ENCODE measurements at regions of chr22 and their contacts with region 1.

Region 1: DNA sequence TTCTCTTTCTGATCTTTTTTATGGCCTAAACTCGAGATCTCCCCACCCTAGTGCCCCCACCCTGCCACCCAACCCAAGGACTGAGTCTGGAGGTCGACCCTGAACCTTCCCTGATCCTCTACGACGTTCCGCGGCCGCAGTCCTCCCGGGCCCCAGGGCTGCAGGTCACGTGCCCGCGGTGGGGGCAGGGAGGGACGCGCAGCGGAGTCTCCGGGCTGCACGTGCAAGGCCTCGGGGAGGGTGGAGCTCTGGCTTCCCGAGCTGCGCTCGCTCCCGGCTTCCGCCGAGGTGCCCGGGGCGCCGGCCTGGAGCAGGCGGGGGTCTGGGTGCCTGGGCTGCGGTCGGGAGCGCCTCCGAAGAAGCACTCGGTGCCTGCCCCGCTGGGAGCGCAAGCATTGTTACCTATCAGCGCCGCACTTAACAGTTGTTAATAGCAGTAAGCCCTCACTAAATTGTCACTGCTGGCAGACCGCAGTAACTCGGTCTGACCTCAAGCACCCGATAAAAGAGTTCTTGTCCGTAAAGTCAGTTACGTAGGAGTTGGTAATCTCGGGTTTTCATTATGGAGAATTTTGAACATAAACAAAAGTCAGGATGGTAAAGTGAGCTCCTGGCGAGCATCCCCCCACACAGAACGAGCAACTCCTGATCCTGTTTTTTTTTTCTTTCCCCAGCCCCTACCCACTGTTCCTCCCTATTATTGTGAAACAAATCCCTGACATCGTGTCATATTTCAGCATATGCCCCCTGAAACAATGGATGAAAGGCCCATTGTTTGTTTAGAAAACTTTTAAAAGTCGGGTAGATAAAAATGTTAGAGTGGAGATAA is 69.7 kb upstream of the EP300 start:
- DNase-seq: peak; percentile 79
- ATAC-seq: peak; percentile 73
- H3K4me3 ChIP-seq: peak overlapping the region; percentile 66 to 88 (median 75)
- H3K27ac ChIP-seq: peak overlapping the region; percentile 75
- H3K4me1 ChIP-seq: peaks cover 33% of the 10 kb centered on the region
- H3K27me3 ChIP-seq: peaks cover 2 to 9% of the 10 kb centered on the region in 2 experiments; a peak in 2 of 5 replicates
- CTCF ChIP-seq: no peak; the same call in none of the 2 replicates
- EP300 ChIP-seq: peak in 1 of 2 experiments; percentile 53; a peak in 2 of 4 replicates
- POLR2A ChIP-seq: no peak; a peak in 1 of 4 replicates
- RAD21 ChIP-seq: no peak

Region 2: GRCh38 chr22:41001722-41002122 is 21.0 kb before region 1 on chr22:
- CTCF ChIA-PET with region 1: no interaction called
- POLR2A ChIA-PET with region 1: interaction called, 50 read pairs
- in situ Hi-C with region 1: no loop called
- intact Hi-C with region 1: no loop called
- DNase-seq: peak; percentile 41
- ATAC-seq: peak; percentile 68
- H3K4me3 ChIP-seq: no peak overlapping the region
- H3K27ac ChIP-seq: peak overlapping the region; percentile 48
- H3K4me1 ChIP-seq: peaks cover 34% of the 10 kb centered on the region
- H3K27me3 ChIP-seq: no peaks in the 10 kb centered on the region
- CTCF ChIP-seq: no peak
- EP300 ChIP-seq: no peak
- POLR2A ChIP-seq: no peak
- RAD21 ChIP-seq: no peak

Region 3: DNA sequence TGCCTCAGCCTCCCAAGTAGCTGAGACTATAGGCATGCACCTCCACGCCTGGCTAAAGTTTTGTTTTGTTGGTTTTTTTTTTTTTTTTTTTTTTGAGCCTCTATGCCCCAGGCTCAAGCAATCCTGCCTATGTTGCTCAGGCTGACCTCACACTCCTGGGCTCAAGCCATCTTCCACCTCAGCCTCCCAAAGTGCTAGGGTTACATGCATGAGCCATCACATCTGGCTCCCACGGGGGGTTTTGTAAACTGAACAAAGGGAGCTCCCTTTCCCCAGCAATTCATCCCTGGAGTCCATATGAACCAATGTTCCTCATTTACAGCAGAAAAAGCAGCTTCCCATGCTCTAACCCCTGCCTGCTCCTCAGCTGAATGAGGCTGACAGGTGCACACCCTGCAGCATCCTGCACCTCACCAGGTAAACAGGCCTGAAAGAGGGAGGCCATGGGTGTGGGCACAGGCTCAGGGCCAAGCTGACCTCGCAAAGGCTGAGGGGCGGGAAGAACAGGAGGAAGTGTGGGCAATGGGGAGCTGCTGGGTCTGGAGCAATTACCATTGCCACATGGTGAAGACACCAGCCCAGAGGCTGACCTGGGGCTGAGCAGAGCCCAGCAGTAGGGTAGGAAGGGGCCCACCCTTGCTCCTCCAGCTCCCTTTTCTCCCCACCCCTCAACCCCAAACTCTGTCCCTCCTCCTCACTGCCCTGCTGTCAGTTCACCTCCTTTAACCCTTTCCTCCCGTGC is 13.3 kb before region 1 on chr22:
- CTCF ChIA-PET with region 1: no interaction called
- POLR2A ChIA-PET with region 1: interaction called, 15 read pairs
- in situ Hi-C with region 1: no loop called
- intact Hi-C with region 1: no loop called
- DNase-seq: no peak
- ATAC-seq: no peak; the same call in 2 of the 3 replicates
- H3K4me3 ChIP-seq: no peak overlapping the region
- H3K27ac ChIP-seq: no peak overlapping the region
- H3K4me1 ChIP-seq: no peaks in the 10 kb centered on the region
- H3K27me3 ChIP-seq: peaks cover 0 to 2% of the 10 kb centered on the region in 2 experiments; a peak in 1 of 5 replicates
- CTCF ChIP-seq: no peak
- EP300 ChIP-seq: no peak
- POLR2A ChIP-seq: no peak
- RAD21 ChIP-seq: no peak

Region 4: GRCh38 chr22:41048791-41049717 is 26.4 kb after region 1 on chr22:
- CTCF ChIA-PET with region 1: no interaction called
- POLR2A ChIA-PET with region 1: interaction called, 31 read pairs
- in situ Hi-C with region 1: no loop called
- intact Hi-C with region 1: no loop called
- DNase-seq: peak; percentile 61
- ATAC-seq: peak; percentile 91
- H3K4me3 ChIP-seq: peak overlapping the region; percentile 41 to 61 (median 46)
- H3K27ac ChIP-seq: peak overlapping the region; percentile 16
- H3K4me1 ChIP-seq: peaks cover 55% of the 10 kb centered on the region
- H3K27me3 ChIP-seq: no peaks in the 10 kb centered on the region; a peak in 1 of 5 replicates
- CTCF ChIP-seq: 0 out of 2 replicates have a peak, but pooled peaks have one; percentile 8
- EP300 ChIP-seq: no peak
- POLR2A ChIP-seq: peak; percentile 45 to 48; a peak in 2 of 4 replicates
- RAD21 ChIP-seq: no peak

Region 5: DNA sequence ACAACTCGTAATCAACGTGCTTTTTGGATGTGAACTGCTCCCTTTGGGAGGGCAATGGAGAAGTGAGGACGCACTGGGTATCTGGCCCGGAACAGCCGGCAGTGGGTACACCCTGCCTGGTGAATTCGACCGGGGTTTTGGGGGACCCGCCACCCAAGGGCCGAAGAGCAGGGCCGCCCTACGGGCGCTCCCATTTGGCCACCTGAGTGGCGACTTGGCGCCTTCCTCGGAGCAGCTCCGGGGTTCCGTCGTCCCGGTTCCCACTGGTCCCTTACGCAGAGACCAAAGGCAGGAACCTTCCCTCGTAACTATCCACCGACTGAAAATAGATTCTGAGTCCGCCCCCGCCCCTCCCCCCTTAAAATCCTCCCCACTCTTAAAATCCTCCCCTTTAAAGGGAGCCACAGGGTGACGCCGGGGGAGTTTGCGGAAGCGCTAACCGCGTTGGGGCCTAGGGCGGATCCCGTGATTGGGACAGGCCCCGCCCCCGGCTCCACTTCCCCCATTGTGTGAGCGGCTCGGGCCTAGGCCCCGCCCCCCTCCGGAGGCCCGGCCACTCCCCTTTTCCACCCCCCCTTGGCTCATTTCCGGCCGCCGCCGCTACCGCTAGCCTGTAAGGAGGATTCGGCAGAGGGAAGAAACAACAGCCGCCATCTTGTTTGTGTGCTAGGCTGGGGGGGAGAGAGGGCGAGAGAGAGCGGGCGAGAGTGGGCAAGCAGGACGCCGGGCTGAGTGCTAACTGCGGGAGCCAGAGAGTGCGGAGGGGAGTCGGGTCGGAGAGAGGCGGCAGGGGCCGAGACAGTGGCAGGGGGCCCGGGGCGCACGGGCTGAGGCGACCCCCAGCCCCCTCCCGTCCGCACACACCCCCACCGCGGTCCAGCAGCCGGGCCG is 68.7 kb after region 1 on chr22:
- CTCF ChIA-PET with region 1: no interaction called
- POLR2A ChIA-PET with region 1: interaction called, 33 read pairs
- in situ Hi-C with region 1: no loop called
- intact Hi-C with region 1: loop called (anchors 1 kb)
- DNase-seq: peak; percentile 96
- ATAC-seq: peak; percentile 90
- H3K4me3 ChIP-seq: peak overlapping the region; percentile 90 to 97 (median 92)
- H3K27ac ChIP-seq: peak overlapping the region; percentile 99
- H3K4me1 ChIP-seq: peaks cover 26% of the 10 kb centered on the region
- H3K27me3 ChIP-seq: no peaks in the 10 kb centered on the region
- CTCF ChIP-seq: no peak
- EP300 ChIP-seq: no peak
- POLR2A ChIP-seq: peak; percentile 48 to 70
- RAD21 ChIP-seq: peak; percentile 26; the same call in 1 of the 2 replicates

Region 6: DNA sequence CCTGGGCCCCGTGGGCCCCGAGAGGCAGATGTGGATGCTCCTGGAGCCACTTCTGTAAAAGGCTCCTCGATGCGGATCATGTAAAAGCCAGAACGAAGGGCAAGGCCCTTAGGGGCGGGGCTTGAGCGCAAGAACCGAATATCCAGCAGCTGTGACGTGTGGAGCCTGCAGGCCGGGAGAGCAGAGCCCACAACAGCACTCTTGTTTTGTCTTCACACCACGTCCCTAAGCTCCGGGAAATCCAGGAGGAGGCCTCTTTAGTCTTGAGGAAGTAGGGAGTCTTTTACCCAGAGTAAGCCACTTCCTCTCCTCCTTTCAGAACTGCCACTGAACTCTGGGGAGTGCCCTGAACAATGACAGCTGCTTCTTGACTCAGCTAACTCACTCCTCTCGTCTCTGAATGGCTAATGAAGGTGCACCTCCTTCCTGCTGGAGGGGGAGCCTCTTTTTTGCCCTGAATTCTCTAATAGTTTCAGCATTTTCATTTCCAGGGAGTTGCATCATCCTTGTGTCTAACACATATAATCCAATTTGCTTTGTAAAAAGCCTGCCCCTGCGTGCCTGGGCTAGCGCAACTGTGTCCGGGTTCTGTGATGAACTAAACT is 195.0 kb after region 1 on chr22:
- CTCF ChIA-PET with region 1: no interaction called
- POLR2A ChIA-PET with region 1: no interaction called
- in situ Hi-C with region 1: no loop called
- intact Hi-C with region 1: no loop called
- DNase-seq: no peak
- ATAC-seq: no peak
- H3K4me3 ChIP-seq: no peak overlapping the region
- H3K27ac ChIP-seq: no peak overlapping the region
- H3K4me1 ChIP-seq: peaks cover 8% of the 10 kb centered on the region
- H3K27me3 ChIP-seq: no peaks in the 10 kb centered on the region; a peak in 1 of 5 replicates
- CTCF ChIP-seq: no peak
- EP300 ChIP-seq: no peak
- POLR2A ChIP-seq: no peak
- RAD21 ChIP-seq: no peak

Measured in HepG2 (cell line).